ENCODE measurements at regions of chr4 and their contacts with region 1.

Region 1: GRCh38 chr4:118772081-118772766 is 63.7 kb downstream of the SEC24D start:
- DNase-seq: peak; percentile 7
- ATAC-seq: peak; percentile 81
- H3K4me3 ChIP-seq: no peak overlapping the region
- H3K27ac ChIP-seq: no peak overlapping the region
- H3K4me1 ChIP-seq: no peaks in the 10 kb centered on the region
- H3K27me3 ChIP-seq: no peaks in the 10 kb centered on the region
- CTCF ChIP-seq: peak; percentile 40; the same call in 1 of the 2 replicates

Region 2: GRCh38 chr4:118865091-118865708 is 93.0 kb after region 1 on chr4:
- CTCF ChIA-PET with region 1: interaction called, 3 read pairs
- POLR2A ChIA-PET with region 1: interaction called, 17 read pairs
- in situ Hi-C with region 1: no loop called
- intact Hi-C with region 1: no loop called
- DNase-seq: peak; percentile 41
- ATAC-seq: peak; percentile 89
- H3K4me3 ChIP-seq: no peak overlapping the region
- H3K27ac ChIP-seq: no peak overlapping the region
- H3K4me1 ChIP-seq: no peaks in the 10 kb centered on the region
- H3K27me3 ChIP-seq: no peaks in the 10 kb centered on the region
- CTCF ChIP-seq: peak; percentile 78

Region 3: DNA sequence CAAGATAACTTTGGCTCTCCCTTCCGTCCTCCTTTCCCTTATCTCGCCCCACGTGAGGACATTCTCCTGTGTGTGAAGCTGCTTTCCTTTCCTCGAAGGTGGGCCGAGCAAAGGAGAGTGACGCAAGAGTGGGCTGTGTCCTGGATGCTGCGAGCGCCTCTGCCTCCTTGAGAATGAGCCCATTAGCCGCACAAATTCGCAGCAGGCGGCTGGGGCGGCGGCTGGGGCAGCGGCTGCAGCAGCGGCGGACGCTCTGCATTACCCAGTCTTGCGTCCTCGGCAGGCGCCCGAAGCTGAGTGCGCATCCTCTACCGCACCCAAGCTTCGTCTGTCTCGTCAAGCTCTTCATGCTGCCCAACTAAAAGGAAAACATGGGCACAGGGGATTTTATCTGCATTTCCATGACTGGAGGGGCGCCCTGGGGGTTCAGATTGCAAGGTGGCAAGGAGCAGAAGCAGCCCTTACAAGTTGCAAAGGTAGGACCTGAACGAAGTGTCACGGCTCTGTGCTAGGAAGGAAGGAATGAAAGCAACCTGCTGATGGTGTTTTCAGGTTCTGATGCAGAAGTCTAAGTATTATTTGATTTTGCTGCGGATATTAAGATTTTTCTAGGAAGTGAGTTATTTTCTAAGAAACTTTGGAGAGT is 116.6 kb after region 1 on chr4 and contains the start of gene SYNPO2:
- CTCF ChIA-PET with region 1: no interaction called
- POLR2A ChIA-PET with region 1: no interaction called
- in situ Hi-C with region 1: no loop called
- intact Hi-C with region 1: loop called (anchors 2 kb)
- DNase-seq: no peak
- ATAC-seq: peak; percentile 88
- H3K4me3 ChIP-seq: peak within 1 kb of the TSS; percentile 45 to 58
- H3K27ac ChIP-seq: no peak within 1 kb of the TSS
- H3K4me1 ChIP-seq: no peaks in the 10 kb centered on the region
- H3K27me3 ChIP-seq: peaks cover 12% of the 10 kb centered on the region
- CTCF ChIP-seq: no peak
- total RNA-seq, gene SYNPO2: 0.28 TPM

Region 4: DNA sequence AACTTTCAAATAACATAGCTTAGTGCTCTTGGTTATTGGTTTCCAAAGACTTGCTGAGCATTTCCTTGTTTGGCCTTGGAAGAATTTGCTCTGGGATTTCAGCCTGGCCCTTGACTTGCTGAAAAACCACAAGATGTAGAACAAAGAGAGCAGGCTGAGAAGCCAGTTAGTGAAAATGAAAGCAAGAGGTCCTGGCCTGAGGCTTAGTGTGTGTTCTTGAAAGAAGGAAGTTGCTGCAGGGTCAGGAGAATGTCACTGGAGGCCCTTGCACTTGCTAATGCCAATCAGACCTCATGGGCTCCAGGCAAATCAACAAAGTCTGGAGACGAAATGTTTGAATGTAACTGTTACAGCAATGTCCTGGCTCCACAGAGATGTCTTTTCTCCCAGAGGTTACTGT is 195.8 kb after region 1 on chr4:
- CTCF ChIA-PET with region 1: interaction called, 3 read pairs
- POLR2A ChIA-PET with region 1: no interaction called
- in situ Hi-C with region 1: no loop called
- intact Hi-C with region 1: loop called (anchors 5 kb)
- DNase-seq: no peak
- ATAC-seq: peak; percentile 60; the same call in 1 of the 2 replicates
- H3K4me3 ChIP-seq: no peak overlapping the region
- H3K27ac ChIP-seq: no peak overlapping the region
- H3K4me1 ChIP-seq: no peaks in the 10 kb centered on the region
- H3K27me3 ChIP-seq: no peaks in the 10 kb centered on the region
- CTCF ChIP-seq: no peak

Measured in Panc1 (cell line).